ENCODE measurements at regions of chr2 and their contacts with region 1.

Region 1: DNA sequence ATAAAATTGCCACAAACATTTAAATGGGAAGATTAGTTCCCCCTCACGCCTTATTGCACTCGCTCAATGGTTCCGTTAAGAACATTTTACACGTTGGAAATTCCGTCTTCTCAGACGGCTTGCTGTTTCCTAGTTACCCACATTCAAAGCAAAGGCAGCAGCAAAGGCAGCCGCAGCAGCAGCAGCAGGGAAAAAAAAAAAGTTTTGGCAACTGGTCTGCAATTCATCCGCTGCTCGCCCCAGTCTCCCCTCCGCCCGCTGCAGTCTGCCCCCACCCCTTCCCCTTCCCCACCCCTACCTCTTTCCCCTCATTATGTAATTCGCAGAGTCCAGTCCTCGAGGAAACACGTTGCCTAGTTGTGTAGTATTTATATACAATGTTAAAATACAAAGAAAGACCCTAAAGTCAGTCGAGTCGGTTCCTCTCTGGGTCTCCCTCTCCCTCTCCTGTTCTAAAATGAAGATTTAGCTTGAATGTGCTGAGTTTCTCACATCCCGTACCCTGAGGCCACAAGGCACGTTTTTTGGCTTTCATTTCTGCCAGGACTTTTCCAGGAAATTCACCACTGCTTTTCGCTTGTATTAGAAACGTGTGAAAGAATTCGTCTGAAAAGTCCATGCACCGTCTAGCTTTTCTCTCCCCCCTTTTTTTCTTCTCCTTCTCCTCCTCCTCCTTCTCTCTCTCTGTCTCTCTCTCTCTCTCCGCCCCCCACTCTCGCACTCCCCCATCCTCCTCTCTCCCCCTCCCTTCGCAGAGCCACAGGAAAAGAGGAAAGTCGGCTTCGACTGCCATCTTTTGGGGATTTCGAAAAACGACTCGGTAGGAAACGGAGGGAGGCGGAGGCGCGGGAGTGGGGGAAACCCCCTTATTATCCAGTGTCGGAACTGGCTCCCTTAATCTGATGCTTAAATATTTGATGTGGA is 140.0 kb downstream of the MEIS1 start:
- DNase-seq: peak; percentile 63
- H3K4me3 ChIP-seq: peak overlapping the region; percentile 36 to 39
- H3K27ac ChIP-seq: peak overlapping the region; percentile 79 to 89
- H3K4me1 ChIP-seq: peaks cover 7% of the 10 kb centered on the region
- H3K27me3 ChIP-seq: peaks cover 13% of the 10 kb centered on the region
- CTCF ChIP-seq: peak in 2 of 4 experiments; percentile 46 to 52
- POLR2A ChIP-seq: no peak

Region 2: GRCh38 chr2:65722028-65722778 is 852.8 kb before region 1 on chr2:
- intact Hi-C with region 1: loop called (anchors 10 kb)
- DNase-seq: no peak
- H3K4me3 ChIP-seq: no peak overlapping the region
- H3K27ac ChIP-seq: no peak overlapping the region
- H3K4me1 ChIP-seq: no peaks in the 10 kb centered on the region
- H3K27me3 ChIP-seq: no peaks in the 10 kb centered on the region
- CTCF ChIP-seq: peak in 2 of 4 experiments; percentile 37 to 48
- POLR2A ChIP-seq: no peak

Region 3: GRCh38 chr2:66305718-66306117 is 269.2 kb before region 1 on chr2:
- intact Hi-C with region 1: no loop called
- DNase-seq: peak; percentile 31
- H3K4me3 ChIP-seq: no peak overlapping the region
- H3K27ac ChIP-seq: no peak overlapping the region
- H3K4me1 ChIP-seq: no peaks in the 10 kb centered on the region
- H3K27me3 ChIP-seq: no peaks in the 10 kb centered on the region
- CTCF ChIP-seq: no peak
- POLR2A ChIP-seq: no peak

Region 4: GRCh38 chr2:66748939-66749338 is 174.0 kb after region 1 on chr2:
- intact Hi-C with region 1: no loop called
- DNase-seq: no peak
- H3K4me3 ChIP-seq: no peak overlapping the region
- H3K27ac ChIP-seq: no peak overlapping the region
- H3K4me1 ChIP-seq: no peaks in the 10 kb centered on the region
- H3K27me3 ChIP-seq: no peaks in the 10 kb centered on the region
- CTCF ChIP-seq: no peak
- POLR2A ChIP-seq: no peak

Region 5: GRCh38 chr2:66851449-66851872 is 276.5 kb after region 1 on chr2:
- intact Hi-C with region 1: loop called (anchors 10 kb)
- DNase-seq: no peak
- H3K4me3 ChIP-seq: no peak overlapping the region
- H3K27ac ChIP-seq: no peak overlapping the region
- H3K4me1 ChIP-seq: peaks cover 3% of the 10 kb centered on the region
- H3K27me3 ChIP-seq: no peaks in the 10 kb centered on the region
- CTCF ChIP-seq: no peak
- POLR2A ChIP-seq: no peak

Region 6: DNA sequence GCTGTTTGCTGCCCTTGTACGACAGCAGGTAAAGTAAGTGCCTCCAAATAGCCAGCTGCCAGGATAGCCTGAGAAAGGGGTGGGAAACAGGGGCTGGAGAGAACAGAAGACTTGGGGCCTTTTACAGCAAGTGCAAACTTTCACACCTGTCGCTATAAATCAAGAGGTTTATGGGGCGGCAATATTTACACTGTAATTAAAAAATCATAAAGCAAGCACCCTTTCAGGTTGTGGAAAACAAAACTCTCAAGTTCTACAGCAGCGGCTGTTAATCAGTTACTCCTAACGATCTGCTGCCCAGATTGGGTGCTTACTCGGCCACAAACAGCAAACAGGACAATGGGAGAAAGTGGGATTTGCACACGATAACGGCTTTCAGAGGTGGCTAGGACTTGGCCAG is 462.7 kb after region 1 on chr2:
- intact Hi-C with region 1: loop called (anchors 10 kb)
- DNase-seq: no peak
- H3K4me3 ChIP-seq: no peak overlapping the region
- H3K27ac ChIP-seq: no peak overlapping the region
- H3K4me1 ChIP-seq: no peaks in the 10 kb centered on the region
- H3K27me3 ChIP-seq: no peaks in the 10 kb centered on the region
- CTCF ChIP-seq: no peak
- POLR2A ChIP-seq: no peak

Region 7: GRCh38 chr2:67215214-67216055 is 640.5 kb after region 1 on chr2:
- intact Hi-C with region 1: loop called (anchors 5 kb)
- DNase-seq: no peak
- H3K4me3 ChIP-seq: no peak overlapping the region
- H3K27ac ChIP-seq: no peak overlapping the region
- H3K4me1 ChIP-seq: no peaks in the 10 kb centered on the region
- H3K27me3 ChIP-seq: no peaks in the 10 kb centered on the region
- CTCF ChIP-seq: peak in 3 of 4 experiments; percentile 25 to 32 (median 30)
- POLR2A ChIP-seq: no peak

Region 8: DNA sequence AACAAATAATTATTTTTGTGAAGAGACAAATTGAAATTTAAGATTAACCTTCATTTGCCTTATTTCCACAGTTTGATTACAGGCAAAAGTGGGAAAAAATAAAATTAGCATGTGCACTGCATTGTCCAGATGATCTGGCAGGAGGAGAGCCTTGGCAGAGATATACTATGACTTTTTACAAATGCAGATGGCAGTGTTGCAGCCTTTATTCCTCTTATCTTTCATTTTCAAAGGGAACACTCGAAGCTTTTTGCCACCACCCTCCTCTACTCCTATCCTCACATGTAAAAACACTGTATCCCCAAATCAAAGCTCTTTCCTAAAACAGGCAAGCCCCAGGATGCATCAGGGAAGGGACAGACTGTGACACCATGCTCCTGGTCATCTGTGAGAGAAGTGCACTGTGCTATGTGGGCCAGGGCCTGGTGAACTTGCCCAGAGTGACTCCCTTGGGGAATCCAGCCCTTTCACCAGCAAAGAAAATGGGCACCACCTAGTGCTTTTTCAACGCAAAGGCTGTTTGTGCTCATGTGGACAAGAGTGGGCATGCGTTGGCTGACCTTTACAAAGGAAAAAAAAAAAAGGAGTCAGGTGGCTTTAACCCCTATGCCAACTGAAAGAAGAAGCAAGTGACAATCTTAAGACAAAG is 747.5 kb after region 1 on chr2:
- intact Hi-C with region 1: loop called (anchors 5 kb)
- DNase-seq: no peak
- H3K4me3 ChIP-seq: no peak overlapping the region
- H3K27ac ChIP-seq: no peak overlapping the region
- H3K4me1 ChIP-seq: no peaks in the 10 kb centered on the region
- H3K27me3 ChIP-seq: no peaks in the 10 kb centered on the region
- CTCF ChIP-seq: peak in 1 of 4 experiments; percentile 49
- POLR2A ChIP-seq: no peak